ENCODE measurements at regions of chr15 and their contacts with region 1.

Region 1: DNA sequence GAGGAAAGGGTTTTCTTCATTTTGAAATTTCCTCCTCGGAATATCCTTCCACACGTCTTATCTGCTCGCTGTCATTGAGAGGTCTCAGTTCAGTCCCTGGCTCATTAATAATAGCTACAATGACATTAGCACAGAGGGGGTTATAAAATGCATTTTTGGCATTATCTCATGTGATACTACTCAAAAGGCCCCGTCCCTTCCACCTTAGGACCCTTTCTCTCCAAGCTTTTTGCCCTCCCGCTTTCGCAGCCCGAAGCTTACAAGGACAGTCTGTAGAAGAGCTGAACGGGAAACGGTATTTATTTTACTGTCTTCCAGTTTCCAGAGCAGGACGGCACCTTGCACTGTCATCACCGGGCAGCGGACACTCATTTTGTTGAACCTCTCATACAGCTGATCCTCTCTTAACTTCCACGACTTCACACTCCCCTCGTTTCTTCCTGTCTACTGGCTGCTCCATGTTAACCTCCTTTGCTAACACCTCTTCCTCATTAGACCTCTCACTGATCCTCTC is 5.6 kb upstream of the PLEKHO2 start:
- DNase-seq: no peak
- ATAC-seq: peak; percentile 12
- H3K4me3 Mint-ChIP-seq: peak overlapping the region; percentile 22
- H3K27ac Mint-ChIP-seq: peak overlapping the region; percentile 96
- H3K4me1 Mint-ChIP-seq: peaks cover 53% of the 10 kb centered on the region
- H3K27me3 Mint-ChIP-seq: no peaks in the 10 kb centered on the region

Region 2: GRCh38 chr15:64667736-64668161 is 168.3 kb before region 1 on chr15:
- CTCF ChIA-PET with region 1: no interaction called
- POLR2A ChIA-PET with region 1: no interaction called
- DNase-seq: no peak
- ATAC-seq: no peak
- H3K4me3 Mint-ChIP-seq: no peak overlapping the region
- H3K27ac Mint-ChIP-seq: peak overlapping the region; percentile 8
- H3K4me1 Mint-ChIP-seq: no peaks in the 10 kb centered on the region
- H3K27me3 Mint-ChIP-seq: no peaks in the 10 kb centered on the region

Region 3: GRCh38 chr15:64825431-64826294 is 10.4 kb before region 1 on chr15 and contains the start of gene PIF1:
- CTCF ChIA-PET with region 1: interaction called, 48 read pairs
- POLR2A ChIA-PET with region 1: interaction called, 18 read pairs
- DNase-seq: peak; percentile 98
- ATAC-seq: peak; percentile 94
- H3K4me3 Mint-ChIP-seq: peak within 1 kb of the TSS; percentile 88
- H3K27ac Mint-ChIP-seq: peak within 1 kb of the TSS; percentile 92
- H3K4me1 Mint-ChIP-seq: peaks cover 40% of the 10 kb centered on the region
- H3K27me3 Mint-ChIP-seq: no peaks in the 10 kb centered on the region
- total RNA-seq, gene PIF1: 69.1 to 71.1 TPM

Region 4: DNA sequence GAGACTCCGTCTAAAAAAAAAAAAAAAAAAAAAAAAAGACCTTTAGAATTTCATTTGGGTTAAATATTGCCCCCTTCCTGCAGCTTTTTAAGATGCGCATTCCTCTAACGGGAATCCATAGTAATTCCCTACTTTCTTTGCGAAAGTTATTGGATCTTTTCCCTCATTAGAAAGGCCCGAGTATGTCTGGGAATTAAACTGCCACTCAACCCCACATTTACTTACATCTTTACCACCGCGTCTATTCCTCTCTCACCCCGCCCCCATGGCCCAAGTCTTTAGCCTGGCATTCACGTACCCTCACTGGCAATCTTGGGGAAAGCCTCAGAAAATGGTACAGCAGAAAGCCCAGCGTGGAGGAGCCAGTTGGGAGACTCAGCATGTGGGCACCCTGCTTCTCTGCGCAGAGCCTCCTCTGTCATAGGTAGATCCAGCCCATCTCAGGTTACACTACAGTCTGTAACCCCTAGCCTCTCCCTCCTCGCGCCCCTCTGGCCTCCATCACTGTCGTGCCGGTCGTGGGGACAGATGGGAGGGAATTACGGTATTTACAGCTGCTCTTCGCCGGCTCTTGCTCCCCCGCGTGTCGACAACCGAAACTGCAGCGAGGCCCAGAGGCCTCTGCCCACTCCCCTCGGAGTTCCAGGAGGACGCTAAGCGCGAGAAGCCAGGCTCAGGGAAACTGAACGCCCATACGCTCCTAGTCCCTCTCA is 69.2 kb after region 1 on chr15:
- CTCF ChIA-PET with region 1: interaction called, 13 read pairs
- POLR2A ChIA-PET with region 1: no interaction called
- DNase-seq: peak; percentile 84
- ATAC-seq: peak; percentile 90
- H3K4me3 Mint-ChIP-seq: peak overlapping the region; percentile 54
- H3K27ac Mint-ChIP-seq: peak overlapping the region; percentile 43
- H3K4me1 Mint-ChIP-seq: peaks cover 40% of the 10 kb centered on the region
- H3K27me3 Mint-ChIP-seq: no peaks in the 10 kb centered on the region

Measured in activated CD8-positive, alpha-beta T cell treated with anti-CD3 and anti-CD28 coated beads, Interleukin-2, amount 10 ng/mL, durations not matched to agents 7 days and 5 days (primary cell).